Mammary epithelial cell (primary cell): ENCODE measurements at regions of chr2 and their contacts with region 1.

Region 1: GRCh38 chr2:47569658-47570472 is 166.9 kb downstream of the MSH2 start:
- DNase-seq: peak; percentile 20
- H3K4me3 ChIP-seq: no peak overlapping the region
- H3K27ac ChIP-seq: no peak overlapping the region
- H3K4me1 ChIP-seq: peaks cover 3% of the 10 kb centered on the region
- H3K27me3 ChIP-seq: peaks cover 32% of the 10 kb centered on the region
- CTCF ChIP-seq: no peak

Region 2: DNA sequence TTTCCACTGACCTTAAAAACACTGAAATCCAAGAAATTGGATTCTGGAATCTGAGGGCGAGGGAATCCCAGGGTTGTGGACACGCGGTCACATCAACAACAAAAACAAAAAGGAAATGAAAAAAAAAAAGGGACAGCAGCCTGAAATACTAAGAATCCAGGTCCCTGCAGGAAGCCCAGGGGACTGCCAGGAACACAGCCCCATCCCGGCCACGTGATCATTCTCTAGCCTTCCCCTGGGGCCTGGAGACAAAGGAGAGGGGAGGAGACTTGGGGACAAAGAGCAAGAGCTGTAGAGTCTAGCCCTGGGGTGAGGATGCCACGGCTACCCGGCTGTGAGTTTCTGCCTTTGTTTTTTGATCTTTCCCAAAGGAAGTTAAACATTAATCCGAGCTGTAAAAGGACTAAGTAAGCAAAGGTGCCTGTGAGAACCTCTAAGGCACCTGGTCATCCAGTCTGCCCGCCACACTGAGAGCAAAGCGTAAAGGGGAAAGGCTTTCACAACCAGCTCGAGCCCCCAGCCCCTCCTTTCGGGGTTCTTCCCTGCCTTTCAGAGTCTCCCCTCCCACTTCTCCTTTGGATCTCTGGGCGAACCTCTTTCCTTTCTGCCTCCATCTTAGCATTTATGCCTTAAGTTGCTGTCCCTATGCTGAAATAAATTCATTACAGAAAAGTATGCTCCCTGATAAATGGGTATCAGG is 224.8 kb before region 1 on chr2:
- CTCF ChIA-PET with region 1: no interaction called
- dilution Hi-C with region 1: no loop called
- in situ Hi-C with region 1: no loop called
- intact Hi-C with region 1: no loop called
- DNase-seq: no peak
- H3K4me3 ChIP-seq: peak overlapping the region in 1 of 3 experiments; percentile 7
- H3K27ac ChIP-seq: no peak overlapping the region
- H3K4me1 ChIP-seq: peaks cover 18% of the 10 kb centered on the region
- H3K27me3 ChIP-seq: no peaks in the 10 kb centered on the region
- CTCF ChIP-seq: peak; percentile 4 to 12

Region 3: DNA sequence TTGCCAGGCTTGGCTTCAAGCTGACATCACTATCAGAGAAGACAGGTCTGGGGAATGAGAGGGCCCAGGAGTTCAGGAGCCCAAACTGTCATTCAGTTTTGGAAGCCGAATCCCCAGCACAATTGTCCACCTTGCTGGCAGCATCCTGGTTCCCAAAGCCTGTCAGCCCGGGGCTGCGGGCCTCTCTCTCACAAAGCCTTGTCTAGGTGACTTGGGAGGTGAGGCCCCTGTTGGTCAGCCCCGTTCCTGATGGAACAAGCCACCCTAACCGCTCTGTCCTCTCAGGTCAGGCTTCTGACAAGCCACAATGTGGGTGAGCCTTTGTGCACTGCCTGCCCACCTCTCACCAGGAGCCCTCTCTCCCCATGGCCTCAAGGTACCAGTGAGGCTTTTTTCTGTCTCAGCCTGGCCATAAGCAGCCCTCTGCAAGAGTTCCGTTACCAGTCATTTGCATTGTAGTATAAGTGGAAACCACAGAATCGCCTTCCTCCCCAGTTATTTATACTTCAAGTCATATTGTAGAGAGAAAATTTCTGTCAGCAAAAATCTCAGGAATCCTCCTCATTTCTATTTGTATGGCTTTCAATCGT is 66.3 kb before region 1 on chr2:
- CTCF ChIA-PET with region 1: no interaction called
- dilution Hi-C with region 1: no loop called
- in situ Hi-C with region 1: no loop called
- intact Hi-C with region 1: no loop called
- DNase-seq: no peak
- H3K4me3 ChIP-seq: no peak overlapping the region
- H3K27ac ChIP-seq: no peak overlapping the region
- H3K4me1 ChIP-seq: peaks cover 8% of the 10 kb centered on the region
- H3K27me3 ChIP-seq: no peaks in the 10 kb centered on the region
- CTCF ChIP-seq: no peak

Region 4: DNA sequence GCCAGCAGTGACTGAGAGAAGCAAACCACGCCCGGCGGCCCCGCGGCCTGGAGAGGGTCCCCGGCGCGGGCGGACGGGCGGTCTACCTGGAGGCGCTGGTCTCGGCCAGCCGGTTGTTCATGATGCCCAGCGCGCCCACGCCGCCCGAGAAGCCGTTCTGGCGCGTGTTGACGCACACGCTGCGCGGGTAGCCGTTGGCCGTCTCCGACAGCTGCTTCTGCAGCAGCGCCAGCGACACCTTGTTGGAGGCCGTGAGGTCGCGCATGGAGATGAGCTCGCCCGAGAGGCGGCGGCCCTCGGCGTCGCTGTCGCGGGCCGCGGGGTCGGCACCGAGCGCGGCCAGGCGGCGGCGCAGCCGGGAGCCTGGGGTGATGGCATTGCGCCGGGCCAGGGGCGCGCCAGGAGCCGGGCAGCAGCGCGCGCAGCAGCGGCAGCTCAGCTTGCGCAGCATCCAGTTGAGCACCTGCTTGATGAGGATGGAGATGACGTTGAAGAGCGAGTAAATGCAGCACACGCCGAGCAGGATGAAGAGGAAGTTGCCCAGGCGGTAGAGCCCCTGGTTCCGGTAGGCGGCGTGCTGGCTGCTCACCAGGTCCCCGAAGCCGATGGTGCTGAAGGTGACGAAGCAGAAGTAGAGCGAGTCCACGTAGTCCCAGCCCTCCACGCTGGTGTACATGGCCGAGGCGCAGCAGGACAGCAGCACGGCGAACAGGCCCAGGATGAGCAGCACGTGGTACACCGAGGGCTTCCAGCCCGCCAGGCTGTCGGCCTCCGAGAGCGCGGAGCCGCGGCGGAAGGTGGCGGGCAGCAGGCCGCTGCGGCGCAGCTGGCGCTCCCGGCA is 48.8 kb before region 1 on chr2:
- CTCF ChIA-PET with region 1: no interaction called
- dilution Hi-C with region 1: loop called (anchors 5 kb)
- in situ Hi-C with region 1: no loop called
- intact Hi-C with region 1: no loop called
- DNase-seq: peak; percentile 64
- H3K4me3 ChIP-seq: peak overlapping the region; percentile 7 to 53 (median 41)
- H3K27ac ChIP-seq: no peak overlapping the region
- H3K4me1 ChIP-seq: peaks cover 15% of the 10 kb centered on the region
- H3K27me3 ChIP-seq: peaks cover 5% of the 10 kb centered on the region
- CTCF ChIP-seq: peak in 1 of 2 donors; percentile 30

Region 5: GRCh38 chr2:47602996-47603395 is 33.1 kb after region 1 on chr2:
- CTCF ChIA-PET with region 1: no interaction called
- dilution Hi-C with region 1: no loop called
- in situ Hi-C with region 1: no loop called
- intact Hi-C with region 1: no loop called
- DNase-seq: no peak
- H3K4me3 ChIP-seq: no peak overlapping the region
- H3K27ac ChIP-seq: no peak overlapping the region
- H3K4me1 ChIP-seq: no peaks in the 10 kb centered on the region
- H3K27me3 ChIP-seq: peaks cover 2% of the 10 kb centered on the region
- CTCF ChIP-seq: no peak